Activated CD4-positive, alpha-beta T cell treated with anti-CD3 and anti-CD28 coated beads, Interleukin-2, amount 10 ng/mL, durations not matched to agents 24 days and 14 days (primary cell): ENCODE measurements at regions of chr16 and their contacts with region 1.

Region 1: DNA sequence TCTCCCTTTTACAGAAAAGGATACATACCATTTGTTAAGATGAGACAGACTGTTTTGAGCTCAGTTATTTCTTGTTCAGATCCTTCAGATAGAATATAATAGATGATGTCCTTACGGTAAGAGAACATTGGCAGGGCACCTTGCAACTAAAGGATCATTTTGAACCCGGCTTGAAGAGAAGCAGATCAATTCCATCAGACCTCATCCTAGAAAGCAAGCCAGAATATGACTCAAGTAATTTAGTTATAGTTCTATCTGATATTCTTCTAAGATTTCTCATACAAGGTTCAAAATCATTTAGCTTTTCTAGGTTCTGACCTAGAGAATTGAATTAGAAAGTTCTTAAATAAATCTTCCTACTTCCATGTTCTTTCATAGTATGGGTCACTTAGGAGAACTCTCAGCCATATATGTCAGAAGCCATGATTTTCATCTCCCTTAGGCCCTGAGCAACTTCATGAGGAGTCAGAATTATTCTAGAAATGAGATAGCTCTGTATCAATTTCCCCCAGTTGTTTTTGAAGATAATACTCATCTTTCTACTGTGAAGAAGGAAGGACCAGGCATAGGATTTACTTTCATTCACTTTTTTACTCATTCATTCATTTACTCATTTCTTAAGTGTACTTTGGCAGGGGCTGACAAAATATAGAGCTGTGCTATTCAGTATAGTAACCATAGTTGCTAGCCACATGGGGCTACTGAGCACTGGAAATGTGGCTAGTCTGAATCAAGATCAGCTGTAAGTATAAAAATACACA is 2.5 kb upstream of the CMTM1 start:
- DNase-seq: no peak
- H3K4me3 Mint-ChIP-seq: no peak overlapping the region
- H3K27ac Mint-ChIP-seq: peak overlapping the region; percentile 72
- H3K4me1 Mint-ChIP-seq: peaks cover 44% of the 10 kb centered on the region
- H3K27me3 Mint-ChIP-seq: no peaks in the 10 kb centered on the region

Region 2: DNA sequence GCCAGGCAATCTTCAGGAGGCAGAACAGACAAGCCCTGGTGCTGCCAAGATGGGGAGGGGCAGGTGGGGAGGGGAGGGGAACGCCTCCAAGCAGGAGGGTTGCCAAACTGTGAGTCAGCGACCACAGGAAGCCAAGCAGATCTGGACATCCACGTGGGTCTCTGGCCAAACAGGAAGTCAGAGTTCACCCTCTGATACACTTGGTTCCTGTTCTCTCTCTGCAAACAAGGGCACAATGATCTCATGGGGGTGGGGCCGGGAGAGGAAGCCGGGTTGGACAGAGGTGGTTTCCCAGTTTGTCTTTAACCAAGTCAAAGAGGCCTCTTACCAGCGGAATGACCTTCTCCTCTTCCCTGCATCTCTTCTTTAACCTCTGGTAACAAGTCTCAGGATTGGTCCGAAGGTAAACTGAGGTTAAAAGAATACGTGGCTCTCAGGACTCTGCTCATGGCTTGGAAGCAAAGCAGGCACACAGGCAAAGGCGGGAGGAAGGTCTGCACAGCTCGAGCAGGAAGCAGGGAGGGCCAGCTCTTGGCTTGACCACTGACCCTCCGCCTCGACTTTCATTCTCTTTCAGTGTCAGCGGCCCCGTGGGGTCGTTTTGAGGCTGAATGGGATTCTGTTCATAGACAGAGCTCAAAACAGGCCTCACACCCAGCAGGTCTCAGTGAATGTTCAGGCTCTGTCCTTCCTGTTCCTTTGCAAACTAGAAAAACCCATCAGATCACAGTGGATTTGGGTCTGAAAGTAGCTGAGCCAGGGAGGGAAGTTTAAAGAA is 46.8 kb before region 1 on chr16:
- intact Hi-C with region 1: loop called (anchors 1 kb)
- DNase-seq: peak; percentile 95
- H3K4me3 Mint-ChIP-seq: peak overlapping the region; percentile 89
- H3K27ac Mint-ChIP-seq: peak overlapping the region; percentile 99
- H3K4me1 Mint-ChIP-seq: peaks cover 67% of the 10 kb centered on the region
- H3K27me3 Mint-ChIP-seq: no peaks in the 10 kb centered on the region

Region 3: GRCh38 chr16:66521951-66522771 is 41.6 kb before region 1 on chr16:
- intact Hi-C with region 1: loop called (anchors 1 kb)
- DNase-seq: peak; percentile 96
- H3K4me3 Mint-ChIP-seq: peak overlapping the region; percentile 83
- H3K27ac Mint-ChIP-seq: peak overlapping the region; percentile 97
- H3K4me1 Mint-ChIP-seq: peaks cover 80% of the 10 kb centered on the region
- H3K27me3 Mint-ChIP-seq: no peaks in the 10 kb centered on the region

Region 4: DNA sequence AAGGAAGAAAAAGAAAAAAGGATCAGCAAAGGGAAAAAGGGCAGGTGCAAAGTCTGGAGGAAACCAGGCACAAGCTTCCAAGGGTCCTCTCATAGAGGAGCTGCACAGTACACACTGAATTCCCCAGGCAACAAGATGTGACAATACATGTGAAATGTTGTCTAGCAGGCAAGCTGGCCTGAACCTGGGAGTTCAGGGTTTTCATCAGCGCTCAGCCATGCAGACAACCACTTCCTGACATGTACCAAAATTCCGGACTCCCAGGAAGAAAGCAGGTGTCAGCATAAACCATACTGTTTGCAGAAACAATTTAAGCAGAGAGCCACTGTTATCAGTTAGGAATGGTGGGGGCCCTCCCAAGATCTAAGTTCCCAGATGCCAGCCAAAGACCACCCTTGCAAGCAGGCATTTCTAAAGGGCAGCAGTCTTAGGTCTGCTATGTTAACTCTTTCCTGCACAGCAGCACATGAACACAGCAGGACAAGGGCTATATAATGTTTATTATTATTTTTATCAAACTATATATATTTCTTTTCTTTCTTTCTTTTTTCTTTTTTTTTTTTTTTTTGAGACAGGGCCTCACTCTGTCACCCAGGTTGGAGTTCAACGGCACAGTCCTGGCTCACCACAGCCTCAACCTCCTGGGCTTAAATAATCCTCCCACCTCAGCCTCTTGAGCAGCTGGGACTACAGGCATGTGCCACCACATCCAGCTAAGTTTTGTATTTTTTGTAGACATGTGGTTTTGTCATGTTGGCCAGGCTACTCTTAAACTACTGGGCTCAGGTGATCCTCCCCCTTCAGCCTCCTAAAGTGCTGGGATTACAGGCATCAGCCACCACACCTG is 23.9 kb before region 1 on chr16:
- intact Hi-C with region 1: no loop called
- DNase-seq: no peak
- H3K4me3 Mint-ChIP-seq: no peak overlapping the region
- H3K27ac Mint-ChIP-seq: peak overlapping the region; percentile 53
- H3K4me1 Mint-ChIP-seq: peaks cover 30% of the 10 kb centered on the region
- H3K27me3 Mint-ChIP-seq: no peaks in the 10 kb centered on the region

Region 5: GRCh38 chr16:66552286-66553177 is 11.2 kb before region 1 on chr16 and contains the start of gene CKLF:
- intact Hi-C with region 1: loop called (anchors 1 kb)
- DNase-seq: peak; percentile 98
- H3K4me3 Mint-ChIP-seq: peak within 1 kb of the TSS; percentile 91
- H3K27ac Mint-ChIP-seq: peak within 1 kb of the TSS; percentile 95
- H3K4me1 Mint-ChIP-seq: peaks cover 68% of the 10 kb centered on the region
- H3K27me3 Mint-ChIP-seq: peaks cover 2% of the 10 kb centered on the region
- total RNA-seq, gene CKLF: 145 and 146 TPM in 2 replicates

Region 6: DNA sequence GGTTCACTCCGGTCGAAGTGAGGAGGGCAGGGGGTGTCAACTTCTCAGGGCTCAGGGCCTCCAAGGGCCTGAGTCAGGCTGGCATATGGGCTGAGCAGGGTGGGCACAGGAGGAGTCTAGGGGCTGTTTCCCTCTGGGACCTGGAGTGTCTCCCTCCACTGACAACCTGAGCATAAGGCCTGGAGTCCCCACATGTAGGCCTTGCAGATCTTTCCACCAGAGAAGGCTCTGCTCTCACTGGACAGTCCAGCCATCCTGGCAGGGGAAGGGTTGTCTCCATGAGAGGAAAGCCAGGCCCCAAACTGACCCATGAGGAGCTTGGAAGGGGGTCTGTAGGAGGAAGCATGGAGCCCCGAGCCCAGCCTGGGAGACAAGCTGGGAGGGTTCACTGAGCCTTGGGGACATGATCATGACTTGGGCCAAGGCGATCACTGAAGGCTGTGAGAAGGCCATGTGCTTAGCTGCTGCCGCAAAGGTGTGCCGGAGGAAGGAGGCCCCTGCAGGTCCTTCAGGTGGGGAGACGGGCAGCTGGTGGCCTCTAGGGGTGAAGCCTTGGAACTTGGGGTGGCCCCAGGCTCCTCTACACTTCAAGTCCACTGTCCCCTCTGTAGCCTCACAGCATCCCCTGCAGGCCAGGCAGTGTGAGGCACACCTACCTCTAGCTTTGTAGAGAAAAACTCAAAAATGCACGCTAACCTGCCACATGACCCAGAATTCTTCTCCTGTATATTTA is 25.4 kb after region 1 on chr16:
- intact Hi-C with region 1: loop called (anchors 1 kb)
- DNase-seq: peak; percentile 89
- H3K4me3 Mint-ChIP-seq: peak overlapping the region; percentile 76
- H3K27ac Mint-ChIP-seq: peak overlapping the region; percentile 56
- H3K4me1 Mint-ChIP-seq: peaks cover 34% of the 10 kb centered on the region
- H3K27me3 Mint-ChIP-seq: no peaks in the 10 kb centered on the region